A673 (cell line): ENCODE measurements at regions of chr5 and their contacts with region 1.

Region 1: GRCh38 chr5:151659001-151659754 is 27.5 kb downstream of the SPARC start:
- DNase-seq: peak; percentile 78
- H3K4me3 ChIP-seq: no peak overlapping the region
- H3K27ac ChIP-seq: no peak overlapping the region
- H3K4me1 ChIP-seq: no peaks in the 10 kb centered on the region
- H3K27me3 ChIP-seq: peaks cover 2% of the 10 kb centered on the region
- CTCF ChIP-seq: peak; percentile 88

Region 2: DNA sequence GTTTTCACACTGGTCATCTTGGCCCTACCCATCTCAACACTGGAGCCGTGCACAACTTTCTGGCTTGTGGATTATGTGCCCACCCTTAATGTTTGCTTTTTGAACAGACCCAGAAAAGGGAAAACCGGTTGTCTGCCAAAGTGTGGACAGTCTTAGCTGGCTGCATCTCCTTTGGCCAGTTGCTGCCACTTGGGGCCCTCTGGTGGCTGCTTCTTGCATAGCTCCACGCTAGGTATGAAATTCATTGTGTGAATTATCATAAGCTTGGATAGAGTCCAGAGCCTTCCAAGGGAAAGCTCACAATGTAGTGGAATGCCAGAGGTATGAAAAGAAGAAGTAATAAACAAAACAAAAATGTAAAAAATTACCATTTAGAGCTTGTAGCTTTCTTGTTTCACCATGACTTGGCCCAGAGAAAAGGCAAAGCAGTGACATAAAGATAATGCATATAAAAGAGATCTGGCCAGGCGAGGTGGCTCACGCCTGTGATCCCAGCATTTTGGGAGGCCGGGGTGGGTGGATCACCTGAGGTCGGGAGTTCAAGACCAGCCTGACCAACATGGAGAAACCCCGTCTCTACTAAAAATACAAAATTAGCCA is 343.1 kb before region 1 on chr5:
- CTCF ChIA-PET with region 1: no interaction called
- POLR2A ChIA-PET with region 1: no interaction called
- intact Hi-C with region 1: loop called (anchors 10 kb)
- DNase-seq: peak; percentile 64
- H3K4me3 ChIP-seq: no peak overlapping the region
- H3K27ac ChIP-seq: no peak overlapping the region
- H3K4me1 ChIP-seq: no peaks in the 10 kb centered on the region
- H3K27me3 ChIP-seq: no peaks in the 10 kb centered on the region
- CTCF ChIP-seq: peak; percentile 93

Region 3: GRCh38 chr5:151523335-151523734 is 135.8 kb before region 1 on chr5:
- CTCF ChIA-PET with region 1: no interaction called
- POLR2A ChIA-PET with region 1: no interaction called
- intact Hi-C with region 1: loop called (anchors 10 kb)
- DNase-seq: peak; percentile 47
- H3K4me3 ChIP-seq: no peak overlapping the region
- H3K27ac ChIP-seq: no peak overlapping the region
- H3K4me1 ChIP-seq: no peaks in the 10 kb centered on the region
- H3K27me3 ChIP-seq: no peaks in the 10 kb centered on the region
- CTCF ChIP-seq: peak; percentile 59

Region 4: GRCh38 chr5:151719228-151720000 is 60.2 kb after region 1 on chr5:
- CTCF ChIA-PET with region 1: interaction called, 4 read pairs
- POLR2A ChIA-PET with region 1: no interaction called
- intact Hi-C with region 1: loop called (anchors 1 kb)
- DNase-seq: peak; percentile 51
- H3K4me3 ChIP-seq: no peak overlapping the region
- H3K27ac ChIP-seq: no peak overlapping the region
- H3K4me1 ChIP-seq: no peaks in the 10 kb centered on the region
- H3K27me3 ChIP-seq: no peaks in the 10 kb centered on the region
- CTCF ChIP-seq: peak; percentile 64

Region 5: DNA sequence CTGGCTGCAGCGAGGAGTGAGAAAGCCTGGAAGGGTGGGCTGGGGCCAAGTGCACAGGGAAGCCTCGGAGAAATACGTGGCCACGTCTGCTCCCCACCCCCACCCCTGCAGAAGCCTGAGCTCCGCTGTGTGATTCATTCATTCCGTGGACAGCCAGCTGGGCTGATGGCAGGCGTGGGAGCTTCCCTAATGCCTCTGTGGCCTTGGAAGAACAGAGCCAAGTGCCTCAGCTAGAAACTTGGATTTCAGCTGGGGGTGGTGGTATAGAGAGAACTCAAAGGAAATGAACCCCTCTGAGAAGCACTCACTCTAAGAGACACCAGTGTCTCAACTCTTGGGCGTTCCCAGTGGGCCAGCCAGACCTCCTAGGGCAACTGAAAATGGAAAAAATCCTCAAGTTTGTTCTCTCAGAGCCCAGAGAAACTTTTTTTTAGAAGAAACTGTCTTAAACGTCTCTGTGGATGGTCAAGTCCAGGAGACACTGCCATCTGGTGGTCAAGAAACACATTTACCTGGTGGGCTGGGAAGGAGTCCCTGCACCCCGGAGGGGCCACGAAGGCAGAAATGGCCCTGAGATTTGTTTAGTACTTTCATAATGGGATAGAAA is 81.3 kb after region 1 on chr5:
- CTCF ChIA-PET with region 1: interaction called, 42 read pairs
- POLR2A ChIA-PET with region 1: no interaction called
- intact Hi-C with region 1: loop called (anchors 1 kb)
- DNase-seq: peak; percentile 84
- H3K4me3 ChIP-seq: no peak overlapping the region
- H3K27ac ChIP-seq: peak overlapping the region; percentile 43
- H3K4me1 ChIP-seq: peaks cover 14% of the 10 kb centered on the region
- H3K27me3 ChIP-seq: no peaks in the 10 kb centered on the region
- CTCF ChIP-seq: peak; percentile 90

Region 6: DNA sequence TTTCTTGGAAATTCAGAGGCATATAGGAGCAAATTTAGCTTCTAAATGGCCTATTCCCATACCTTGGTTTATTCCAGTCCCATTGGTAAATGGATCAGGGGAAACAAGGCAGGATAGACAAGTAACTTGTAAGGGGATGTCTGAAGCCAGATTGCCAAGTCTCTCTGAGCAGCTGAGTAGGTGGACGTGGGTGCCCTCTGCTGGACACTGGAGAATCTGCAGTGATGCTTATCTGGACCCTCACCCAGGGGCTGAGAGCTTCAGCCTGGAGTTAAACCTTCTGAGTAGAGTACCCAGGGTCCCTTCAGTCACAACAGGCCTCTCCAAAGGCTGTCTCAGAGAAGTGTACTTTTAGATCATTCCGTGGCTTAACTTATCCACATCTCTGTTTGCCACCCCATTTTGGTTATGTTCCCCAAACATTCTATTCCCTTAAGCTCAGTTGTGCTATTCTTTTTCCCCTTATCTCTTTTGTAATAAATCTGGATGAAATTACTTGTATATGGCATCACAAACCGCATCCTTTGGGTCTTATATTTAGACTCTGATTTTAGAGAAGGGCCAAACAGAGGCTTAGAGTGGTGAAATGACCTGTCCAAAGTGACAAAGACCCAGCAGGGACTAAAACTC is 483.8 kb after region 1 on chr5:
- CTCF ChIA-PET with region 1: no interaction called
- POLR2A ChIA-PET with region 1: no interaction called
- intact Hi-C with region 1: loop called (anchors 10 kb)
- DNase-seq: peak; percentile 67
- H3K4me3 ChIP-seq: no peak overlapping the region
- H3K27ac ChIP-seq: no peak overlapping the region
- H3K4me1 ChIP-seq: no peaks in the 10 kb centered on the region
- H3K27me3 ChIP-seq: peaks cover 14% of the 10 kb centered on the region
- CTCF ChIP-seq: peak; percentile 86

Region 7: DNA sequence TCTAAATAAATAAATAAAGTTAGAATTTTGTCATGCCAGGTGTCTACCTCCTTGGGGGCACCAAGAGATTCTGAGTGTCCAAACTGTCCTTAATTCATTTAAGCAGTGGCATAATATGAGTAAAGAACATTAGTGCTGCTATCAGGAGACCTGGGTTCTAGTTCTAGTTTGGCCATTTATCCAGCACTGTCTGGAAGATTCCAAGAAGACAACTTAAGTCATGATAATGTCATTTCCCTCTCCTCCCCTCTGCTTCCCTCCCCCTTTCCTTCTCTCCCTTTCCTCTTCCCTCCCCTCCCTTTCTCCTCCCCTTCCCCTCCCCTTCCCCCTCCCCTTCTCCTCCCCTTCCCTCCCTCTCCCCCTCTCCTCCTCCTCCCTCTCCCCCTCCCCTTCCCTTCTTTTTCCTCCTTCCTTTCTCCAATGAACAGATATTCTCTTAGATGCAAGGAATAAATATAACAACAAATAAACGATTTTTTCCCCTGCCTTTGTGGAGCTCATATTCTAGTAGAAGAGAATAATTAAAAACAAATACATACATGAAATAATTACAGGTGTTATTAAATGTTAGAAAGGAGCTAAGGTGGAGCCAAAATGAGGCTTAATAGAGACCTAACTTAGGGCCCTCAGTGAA is 655.1 kb after region 1 on chr5:
- CTCF ChIA-PET with region 1: no interaction called
- POLR2A ChIA-PET with region 1: no interaction called
- intact Hi-C with region 1: no loop called
- DNase-seq: no peak
- H3K4me3 ChIP-seq: no peak overlapping the region
- H3K27ac ChIP-seq: no peak overlapping the region
- H3K4me1 ChIP-seq: no peaks in the 10 kb centered on the region
- H3K27me3 ChIP-seq: no peaks in the 10 kb centered on the region
- CTCF ChIP-seq: no peak